ENCODE measurements at regions of chr9 and their contacts with region 1.

Region 1: DNA sequence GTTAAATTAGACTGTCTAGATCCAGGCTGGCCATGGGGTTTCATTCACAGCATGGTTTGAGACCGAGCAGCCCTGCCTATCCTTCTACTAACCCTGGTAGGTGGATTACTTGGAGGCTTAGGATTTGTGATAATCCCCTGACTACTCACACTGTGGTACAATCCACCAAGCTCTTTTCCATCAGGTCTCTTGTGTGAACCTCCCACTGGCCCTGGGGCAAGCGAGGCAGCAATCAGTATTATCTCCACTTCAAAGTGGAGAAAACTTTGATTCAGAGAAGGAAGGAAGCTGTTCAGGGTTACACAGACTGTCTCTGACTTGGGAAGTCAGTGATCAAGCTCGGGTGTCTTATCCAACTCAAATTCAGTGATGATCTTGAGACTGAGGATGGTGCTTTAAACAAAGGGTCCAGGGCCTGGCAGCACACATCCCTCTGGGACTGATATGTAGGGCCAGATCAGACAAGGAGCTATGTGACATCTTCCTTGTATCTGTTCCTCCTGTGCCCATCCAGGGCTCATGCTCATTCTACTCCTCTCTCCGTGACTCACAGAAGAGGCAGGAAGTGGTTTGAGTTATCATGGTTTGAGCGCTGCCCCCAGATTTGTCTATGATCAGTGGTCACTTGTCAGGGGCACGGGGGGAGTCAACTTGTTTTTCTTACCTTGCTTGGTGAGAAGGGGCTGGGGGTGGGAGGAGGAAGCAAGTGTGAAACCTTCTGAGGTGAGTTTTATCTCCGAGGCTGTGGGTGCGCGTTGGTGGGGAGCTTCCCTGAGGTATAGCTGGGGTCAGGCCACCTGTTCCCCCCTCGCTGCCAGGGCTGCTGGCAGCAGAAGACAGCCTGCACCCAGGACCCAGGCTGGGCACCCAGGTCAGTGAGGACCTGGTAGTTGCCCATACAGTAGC is 48.6 kb downstream of the RGS3 start:
- DNase-seq: peak; percentile 82
- H3K4me3 Mint-ChIP-seq: peak overlapping the region; percentile 41
- H3K27ac Mint-ChIP-seq: peak overlapping the region; percentile 85
- H3K4me1 Mint-ChIP-seq: peaks cover 50% of the 10 kb centered on the region
- H3K27me3 Mint-ChIP-seq: peaks cover 2% of the 10 kb centered on the region

Region 2: GRCh38 chr9:113349445-113350094 is 162.5 kb before region 1 on chr9 and contains the start of gene BSPRY:
- CTCF ChIA-PET with region 1: no interaction called
- intact Hi-C with region 1: loop called (anchors 2 kb)
- DNase-seq: peak; percentile 42
- H3K4me3 Mint-ChIP-seq: peak within 1 kb of the TSS; percentile 87
- H3K27ac Mint-ChIP-seq: peak within 1 kb of the TSS; percentile 84
- H3K4me1 Mint-ChIP-seq: peaks cover 61% of the 10 kb centered on the region
- H3K27me3 Mint-ChIP-seq: peaks cover 26% of the 10 kb centered on the region
- total RNA-seq, gene BSPRY: 7.7 to 8.3 TPM

Region 3: DNA sequence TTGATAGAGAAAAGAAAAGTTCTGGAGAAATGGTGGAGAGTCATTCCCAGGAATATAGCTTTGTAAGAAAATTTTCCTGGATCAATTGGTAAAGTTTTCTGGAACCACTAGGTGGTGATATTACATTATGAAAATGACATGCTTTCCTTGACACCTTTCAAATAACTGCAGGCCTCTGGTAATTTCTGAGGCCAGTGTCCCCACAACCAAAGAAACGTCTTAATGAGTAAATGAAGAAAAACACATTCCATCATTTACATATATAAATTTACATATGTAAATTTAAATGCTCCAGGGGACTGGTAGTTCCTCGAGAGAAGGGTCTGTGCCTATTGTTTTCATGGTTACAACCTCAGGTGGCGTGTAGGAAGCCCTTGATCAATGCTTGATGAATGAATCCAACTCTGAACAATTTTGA is 65.8 kb before region 1 on chr9:
- CTCF ChIA-PET with region 1: interaction called, 8 read pairs
- intact Hi-C with region 1: loop called (anchors 2 kb)
- DNase-seq: peak; percentile 22
- H3K4me3 Mint-ChIP-seq: no peak overlapping the region
- H3K27ac Mint-ChIP-seq: no peak overlapping the region
- H3K4me1 Mint-ChIP-seq: no peaks in the 10 kb centered on the region
- H3K27me3 Mint-ChIP-seq: no peaks in the 10 kb centered on the region

Region 4: DNA sequence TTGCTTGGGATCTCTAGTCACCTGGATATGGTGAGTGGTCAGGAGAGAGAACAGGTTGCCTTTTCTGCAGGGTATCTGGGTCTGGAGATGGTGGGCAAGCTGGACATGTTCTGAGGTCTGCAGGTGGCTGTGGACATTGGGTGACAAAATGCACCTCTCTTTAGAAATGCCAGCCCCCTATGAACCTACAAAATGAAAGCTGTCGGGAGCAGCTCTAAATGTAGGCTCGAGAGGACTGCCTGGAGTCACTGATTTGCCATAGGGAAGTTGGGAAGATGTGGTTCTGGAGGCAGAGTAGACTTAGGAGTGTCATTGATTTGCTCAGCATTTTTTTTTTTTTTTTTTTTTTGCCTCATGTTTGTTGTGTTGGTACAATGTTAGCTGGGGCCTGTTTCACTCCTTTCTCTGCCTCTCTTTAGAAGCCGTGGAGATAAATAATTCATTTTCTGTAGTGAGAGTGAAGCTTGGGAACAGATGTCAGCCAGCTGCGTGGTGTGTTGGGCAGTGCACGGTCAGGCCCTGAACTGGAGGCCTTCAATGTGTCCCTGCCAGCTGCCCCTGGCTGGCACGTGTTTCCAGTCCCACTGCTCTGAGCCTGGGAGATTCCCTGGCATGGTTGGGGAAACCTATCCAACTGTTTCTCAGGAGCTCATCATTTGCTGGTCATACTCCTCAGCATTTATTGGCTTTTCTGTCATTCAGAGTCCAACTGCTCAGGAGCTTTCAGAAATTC is 43.2 kb before region 1 on chr9:
- CTCF ChIA-PET with region 1: no interaction called
- intact Hi-C with region 1: no loop called
- DNase-seq: no peak
- H3K4me3 Mint-ChIP-seq: no peak overlapping the region
- H3K27ac Mint-ChIP-seq: no peak overlapping the region
- H3K4me1 Mint-ChIP-seq: peaks cover 2% of the 10 kb centered on the region
- H3K27me3 Mint-ChIP-seq: no peaks in the 10 kb centered on the region

Region 5: DNA sequence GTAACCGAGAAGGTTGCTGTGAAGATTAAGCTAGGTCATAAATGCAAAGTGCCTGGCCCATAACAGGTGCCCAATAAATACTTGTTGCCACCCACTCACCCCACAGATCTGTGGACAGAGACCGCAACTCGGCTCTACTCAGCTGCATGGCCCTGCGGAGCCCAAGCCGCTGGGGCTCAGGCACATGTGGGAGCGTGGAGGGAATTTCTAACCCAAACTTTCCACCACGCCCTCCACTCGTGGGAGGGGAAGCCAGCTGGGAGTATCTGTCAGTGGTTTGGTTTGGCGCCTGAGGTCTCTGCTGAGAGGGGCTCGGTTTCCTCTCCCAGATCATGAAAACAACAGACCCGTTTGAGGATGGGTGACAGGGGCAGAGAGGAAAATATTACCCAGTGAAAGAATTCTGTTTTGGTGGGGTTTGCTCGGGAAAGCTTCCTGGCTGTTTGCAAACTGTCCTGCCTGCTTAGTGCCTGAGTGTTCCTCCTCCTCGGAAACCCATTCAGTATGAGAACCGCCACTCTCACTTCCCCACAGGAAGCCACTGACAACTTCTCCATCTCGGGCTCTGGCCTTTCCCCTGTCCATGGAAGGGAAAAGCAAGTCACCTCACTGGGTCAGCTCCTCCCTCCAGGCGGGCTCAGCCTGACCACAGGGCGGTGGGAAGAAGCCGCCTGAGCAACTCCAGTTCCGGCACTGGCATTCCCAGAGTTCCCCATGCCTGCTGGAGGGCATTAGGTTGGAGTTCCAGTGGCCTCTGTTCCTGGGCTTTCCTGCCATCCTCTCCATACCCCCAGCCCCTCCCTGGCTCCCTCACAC is 11.5 kb after region 1 on chr9:
- CTCF ChIA-PET with region 1: interaction called, 4 read pairs
- intact Hi-C with region 1: loop called (anchors 1 kb)
- DNase-seq: peak; percentile 55
- H3K4me3 Mint-ChIP-seq: peak overlapping the region; percentile 10
- H3K27ac Mint-ChIP-seq: peak overlapping the region; percentile 13
- H3K4me1 Mint-ChIP-seq: peaks cover 55% of the 10 kb centered on the region
- H3K27me3 Mint-ChIP-seq: no peaks in the 10 kb centered on the region

Region 6: DNA sequence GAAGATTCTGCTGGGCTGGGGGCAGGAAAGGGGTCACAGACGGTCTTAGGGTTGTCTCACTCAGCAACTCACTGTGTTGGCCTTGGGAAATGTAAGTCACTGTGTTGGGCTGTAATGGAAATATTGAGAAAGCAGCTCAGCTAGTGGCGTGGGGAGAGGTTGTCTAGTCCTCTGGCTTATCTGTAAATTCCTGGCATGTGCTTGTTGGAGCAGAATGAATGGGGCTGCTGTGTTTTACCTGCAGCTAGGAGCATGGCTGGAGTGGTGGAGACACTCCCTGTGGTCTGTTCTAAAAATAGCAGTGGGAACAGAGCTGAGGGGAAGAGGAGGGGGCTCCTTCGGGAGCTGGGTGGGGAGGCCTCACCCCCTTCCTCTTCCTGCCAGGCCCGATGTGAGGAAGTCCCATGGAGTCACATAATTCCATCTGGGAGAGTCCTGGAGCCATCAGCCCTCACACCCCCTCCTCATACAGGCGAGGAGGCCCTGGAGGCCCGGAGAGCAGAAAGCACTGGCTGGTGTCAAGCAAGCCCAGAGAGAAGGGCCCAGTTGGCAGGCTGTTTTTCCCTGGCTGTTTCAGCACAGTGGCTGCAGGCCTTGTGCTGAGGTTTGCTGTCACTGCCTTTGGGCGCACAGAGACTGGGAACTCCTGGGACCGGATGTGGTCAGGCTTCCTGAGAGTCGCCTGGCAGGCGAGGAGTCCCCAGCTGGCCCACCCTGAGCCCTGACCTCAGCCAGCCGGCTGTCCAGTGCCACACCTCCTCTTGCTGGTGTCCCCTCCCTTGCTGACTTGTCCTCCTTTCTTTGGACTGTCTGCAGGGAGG is 36.3 kb after region 1 on chr9:
- CTCF ChIA-PET with region 1: no interaction called
- intact Hi-C with region 1: loop called (anchors 5 kb)
- DNase-seq: peak; percentile 32
- H3K4me3 Mint-ChIP-seq: no peak overlapping the region
- H3K27ac Mint-ChIP-seq: peak overlapping the region; percentile 87
- H3K4me1 Mint-ChIP-seq: peaks cover 23% of the 10 kb centered on the region
- H3K27me3 Mint-ChIP-seq: no peaks in the 10 kb centered on the region

Region 7: DNA sequence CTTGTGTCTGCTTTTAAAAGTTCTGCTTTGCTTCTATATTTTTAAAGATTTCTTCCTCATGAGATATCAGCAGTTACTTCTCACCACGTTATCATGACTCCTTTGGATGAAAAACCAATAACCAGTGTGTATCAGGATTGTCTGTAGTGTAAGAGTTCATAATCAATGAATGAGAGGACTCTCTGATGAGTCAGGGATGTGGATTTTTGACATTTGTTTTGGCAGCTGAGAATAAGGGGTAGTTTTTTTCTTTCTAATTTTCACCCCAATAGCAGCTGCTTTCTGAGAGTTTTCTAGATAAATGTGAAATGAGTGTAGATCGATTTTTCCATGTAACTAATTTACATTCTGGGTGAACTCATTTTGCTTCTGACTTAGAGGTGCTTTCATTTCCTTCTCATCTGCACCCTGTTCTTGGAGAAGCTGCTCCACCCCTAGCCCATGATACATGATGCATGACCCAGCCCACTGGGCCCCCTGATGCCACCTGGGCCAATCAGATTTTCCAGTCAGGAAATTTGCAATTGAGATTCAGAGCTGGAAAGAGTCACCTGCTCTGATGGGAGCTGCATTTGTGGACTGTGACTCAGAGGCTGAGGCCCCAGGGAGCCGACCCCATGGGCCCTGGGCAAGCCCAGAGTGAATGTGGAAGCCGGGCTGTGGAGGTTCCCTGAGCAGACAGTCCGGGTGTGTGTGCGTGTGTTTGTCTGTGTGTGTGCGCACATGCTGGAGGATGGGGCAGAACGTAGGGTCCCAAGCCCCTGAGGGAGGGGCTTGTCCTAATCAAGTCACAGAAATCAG is 110.7 kb after region 1 on chr9:
- CTCF ChIA-PET with region 1: interaction called, 3 read pairs
- intact Hi-C with region 1: loop called (anchors 2 kb)
- DNase-seq: peak; percentile 84
- H3K4me3 Mint-ChIP-seq: peak overlapping the region; percentile 14
- H3K27ac Mint-ChIP-seq: peak overlapping the region; percentile 86
- H3K4me1 Mint-ChIP-seq: peaks cover 34% of the 10 kb centered on the region
- H3K27me3 Mint-ChIP-seq: peaks cover 2% of the 10 kb centered on the region

Region 8: DNA sequence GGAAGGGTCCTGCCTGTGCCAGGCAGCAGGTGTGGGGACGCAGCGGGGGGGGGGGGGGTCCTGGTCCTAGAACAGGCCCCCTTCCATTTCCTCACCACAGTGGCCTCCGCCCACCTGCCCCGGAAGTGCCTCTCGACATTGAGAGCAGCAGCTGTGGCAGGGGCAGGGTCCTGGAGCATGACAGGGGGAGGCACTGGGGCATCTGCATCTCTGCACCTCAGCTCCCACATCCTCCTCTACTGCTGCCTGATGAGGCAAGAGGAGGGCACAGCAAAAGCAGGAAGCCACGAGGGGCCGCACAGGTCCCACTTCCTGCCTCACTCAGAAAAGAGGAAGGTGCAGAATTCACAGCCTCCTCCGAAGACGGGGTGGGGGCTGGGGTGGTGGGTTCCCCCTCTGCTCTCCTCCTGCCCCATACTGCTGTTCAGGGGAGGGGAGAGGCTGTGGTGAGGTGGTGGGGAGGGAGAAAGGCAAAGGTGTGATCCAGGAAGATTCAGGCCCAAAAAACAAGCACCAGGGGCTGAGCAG is 860.9 kb after region 1 on chr9:
- CTCF ChIA-PET with region 1: no interaction called
- intact Hi-C with region 1: loop called (anchors 10 kb)
- DNase-seq: peak; percentile 93
- H3K4me3 Mint-ChIP-seq: peak overlapping the region; percentile 67
- H3K27ac Mint-ChIP-seq: peak overlapping the region; percentile 95
- H3K4me1 Mint-ChIP-seq: peaks cover 81% of the 10 kb centered on the region
- H3K27me3 Mint-ChIP-seq: no peaks in the 10 kb centered on the region

Measured in activated naive CD4-positive, alpha-beta T cell treated with anti-CD3 and anti-CD28 coated beads for 36 hours (primary cell).